AG04450 (cell line): ENCODE measurements at regions of chr6 and their contacts with region 1.

Region 1: GRCh38 chr6:32177788-32178546 is at the start of gene RNF5:
- DNase-seq: peak; percentile 100
- H3K4me3 ChIP-seq: peak within 1 kb of the TSS; percentile 97
- H3K27ac ChIP-seq: peak within 1 kb of the TSS; percentile 99
- H3K27me3 ChIP-seq: no peaks in the 10 kb centered on the region
- CTCF ChIP-seq: no peak
- polyA plus RNA-seq, gene RNF5: 33.3 TPM in 2 replicates

Region 2: GRCh38 chr6:32190054-32190851 is 12.3 kb after region 1 on chr6 and contains the start of gene PBX2:
- CTCF ChIA-PET with region 1: interaction called, 13 read pairs
- POLR2A ChIA-PET with region 1: interaction called, 11 read pairs
- DNase-seq: peak; percentile 60
- H3K4me3 ChIP-seq: peak within 1 kb of the TSS; percentile 82
- H3K27ac ChIP-seq: peak within 1 kb of the TSS; percentile 82
- H3K27me3 ChIP-seq: no peaks in the 10 kb centered on the region
- CTCF ChIP-seq: no peak
- polyA plus RNA-seq, gene PBX2: 56.5 and 59.2 TPM in 2 replicates